Activated T-helper 2 cell treated with anti-CD3 and anti-CD28 coated beads, Interferon-gamma antibody, Interleukin-2, Interleukin-4, amounts not matched to agents 10 μg/mL and 5 μg/mL and 100 μg/mL, durations not matched to agents 14 hours and 24 hours and 36 hours (primary cell): ENCODE measurements at regions of chr10 and their contacts with region 1.

Region 1: GRCh38 chr10:13160934-13161856 is at the start of gene MCM10:
- DNase-seq: peak; percentile 98
- H3K4me3 Mint-ChIP-seq: peak within 1 kb of the TSS; percentile 85
- H3K27ac Mint-ChIP-seq: peak within 1 kb of the TSS; percentile 89
- H3K4me1 Mint-ChIP-seq: peaks cover 43% of the 10 kb centered on the region
- H3K27me3 Mint-ChIP-seq: no peaks in the 10 kb centered on the region
- total RNA-seq, gene MCM10: 73.3 and 78.5 TPM in 2 replicates

Region 2: DNA sequence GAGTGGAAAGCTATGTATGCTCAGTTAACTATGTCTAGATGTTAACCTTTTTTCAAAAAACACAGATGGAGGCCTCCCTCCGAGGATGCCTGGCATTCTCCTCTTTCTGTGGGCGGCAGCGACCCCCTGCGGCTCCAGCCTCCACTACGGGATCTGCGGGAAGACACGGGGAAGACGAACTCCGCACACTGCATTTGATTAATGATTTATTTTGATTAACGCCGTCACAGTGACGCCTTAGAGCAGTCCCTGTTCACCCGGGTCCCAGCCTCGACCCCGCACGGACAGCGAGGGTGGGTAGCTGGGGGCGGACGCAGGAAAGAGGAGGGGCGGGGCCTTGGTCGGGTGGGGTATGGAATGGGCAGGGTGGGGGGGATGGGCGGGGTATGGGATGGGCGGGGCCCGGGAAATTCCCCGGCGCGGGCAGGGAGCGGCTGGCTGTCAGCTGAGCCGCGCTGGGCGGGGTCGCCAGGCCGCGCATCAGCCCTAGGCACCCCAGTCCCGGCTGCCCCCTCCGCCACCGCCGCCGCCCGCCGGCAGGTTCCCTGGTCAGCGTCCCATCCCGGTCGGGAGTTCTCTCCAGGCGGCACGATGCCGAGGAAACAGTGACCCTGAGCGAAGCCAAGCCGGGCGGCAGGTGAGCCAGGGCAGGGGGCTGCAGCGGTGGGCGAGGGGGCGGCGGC is 61.4 kb before region 1 on chr10 and contains the start of gene OPTN:
- intact Hi-C with region 1: loop called (anchors 5 kb)
- DNase-seq: peak; percentile 71
- H3K4me3 Mint-ChIP-seq: peak within 1 kb of the TSS; percentile 88
- H3K27ac Mint-ChIP-seq: peak within 1 kb of the TSS; percentile 86
- H3K4me1 Mint-ChIP-seq: peaks cover 44% of the 10 kb centered on the region
- H3K27me3 Mint-ChIP-seq: no peaks in the 10 kb centered on the region
- total RNA-seq, gene OPTN: 49.0 and 53.2 TPM in 2 replicates

Region 3: DNA sequence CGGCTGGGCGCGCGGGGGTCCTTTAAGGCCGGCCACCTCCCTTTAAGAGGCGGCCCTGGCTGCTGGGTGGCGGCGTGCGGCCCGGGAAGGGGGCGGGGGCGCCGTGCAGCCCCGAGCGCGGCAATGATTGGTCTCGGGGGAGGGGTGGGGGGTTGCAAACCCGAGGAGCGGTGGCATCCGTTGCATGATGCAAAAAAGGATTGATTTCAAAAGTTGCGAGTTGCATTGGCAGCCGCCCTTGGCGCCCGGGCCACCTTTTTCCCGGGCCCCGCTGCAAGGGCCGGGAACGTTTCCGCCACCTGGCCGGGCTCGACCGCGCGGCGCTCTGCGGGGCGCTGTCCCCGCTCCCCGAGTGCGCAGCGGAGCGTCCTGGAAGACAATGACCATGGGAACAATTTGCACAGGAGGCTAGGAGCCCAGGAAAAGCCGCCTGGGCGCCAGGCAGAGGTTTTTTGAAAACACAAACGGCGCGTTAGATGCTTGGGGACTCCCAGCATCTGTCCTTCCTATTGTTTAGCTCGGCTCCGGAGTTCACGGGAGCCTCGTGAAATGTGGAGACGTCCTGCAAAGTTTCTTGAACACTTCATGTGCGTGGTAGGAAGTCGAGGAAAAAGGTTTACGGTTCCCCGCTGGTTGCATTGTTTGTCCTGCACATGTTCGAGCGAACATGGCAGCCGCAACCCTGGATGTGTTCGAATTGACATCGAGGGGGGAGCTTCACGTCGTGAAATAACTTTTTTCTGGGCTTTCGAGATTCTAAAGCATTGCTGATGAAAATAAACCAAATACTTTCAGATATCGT is 187.2 kb after region 1 on chr10 and contains the start of gene SEPHS1:
- intact Hi-C with region 1: loop called (anchors 2 kb)
- DNase-seq: peak; percentile 79
- H3K4me3 Mint-ChIP-seq: peak within 1 kb of the TSS; percentile 90
- H3K27ac Mint-ChIP-seq: peak within 1 kb of the TSS; percentile 90
- H3K4me1 Mint-ChIP-seq: peaks cover 48% of the 10 kb centered on the region
- H3K27me3 Mint-ChIP-seq: peaks cover 5% of the 10 kb centered on the region
- total RNA-seq, gene SEPHS1: 58.8 and 61.9 TPM in 2 replicates

Region 4: DNA sequence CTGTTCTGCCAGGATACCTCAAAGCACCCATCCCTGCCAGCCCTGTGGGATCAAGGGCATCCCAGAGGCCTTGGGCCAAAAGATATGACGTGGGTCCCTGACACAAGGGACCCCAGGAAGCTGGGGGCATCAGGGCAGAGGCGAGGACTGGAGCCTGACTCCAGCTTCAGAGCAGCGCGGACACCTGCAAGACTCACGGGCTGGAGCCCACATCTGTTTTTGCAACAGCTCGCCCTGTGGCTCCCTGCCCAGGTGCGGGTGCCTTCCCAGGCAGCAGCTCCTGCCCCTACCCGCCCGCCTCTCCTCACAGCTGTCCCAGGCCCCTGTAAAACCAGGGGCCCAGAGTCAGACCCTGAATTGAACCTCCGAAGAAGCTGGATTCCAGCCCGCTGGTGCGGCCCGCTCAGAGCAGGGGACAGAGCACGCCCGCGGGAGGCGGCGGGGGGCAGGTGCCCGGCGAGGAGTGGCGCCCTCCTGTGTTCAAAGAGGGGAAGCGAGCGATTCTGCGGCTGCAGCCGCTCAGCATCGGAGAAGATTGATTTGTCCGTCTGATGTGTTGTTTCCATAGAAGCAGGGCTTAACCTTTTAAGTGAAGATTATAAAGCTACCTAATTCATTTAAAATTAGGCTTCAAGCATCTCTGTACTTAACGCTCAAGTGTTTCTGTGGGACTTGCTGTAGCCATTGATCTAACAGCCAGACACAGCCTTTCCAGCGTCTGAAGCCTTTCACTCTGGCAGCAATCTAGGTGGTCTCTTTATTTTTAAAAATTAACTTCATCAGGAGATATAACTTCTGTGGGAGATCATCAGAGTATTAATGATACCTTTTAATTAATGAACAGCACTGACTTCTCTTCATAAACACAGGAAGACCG is 279.2 kb after region 1 on chr10:
- intact Hi-C with region 1: loop called (anchors 1 kb)
- DNase-seq: peak; percentile 49
- H3K4me3 Mint-ChIP-seq: peak overlapping the region; percentile 4
- H3K27ac Mint-ChIP-seq: no peak overlapping the region
- H3K4me1 Mint-ChIP-seq: peaks cover 10% of the 10 kb centered on the region
- H3K27me3 Mint-ChIP-seq: peaks cover 41% of the 10 kb centered on the region